ENCODE measurements at regions of chr10 and their contacts with region 1.

Region 1: GRCh38 chr10:8059959-8060703 is 5.6 kb downstream of the GATA3 start:
- DNase-seq: peak; percentile 82
- H3K4me3 ChIP-seq: peak overlapping the region; percentile 86 to 90 (median 87)
- H3K27ac ChIP-seq: peak overlapping the region; percentile 76
- H3K4me1 ChIP-seq: peaks cover 63% of the 10 kb centered on the region
- H3K27me3 ChIP-seq: no peaks in the 10 kb centered on the region
- CTCF ChIP-seq: no peak

Region 2: GRCh38 chr10:8279598-8279997 is 219.5 kb after region 1 on chr10:
- CTCF ChIA-PET with region 1: no interaction called
- dilution Hi-C with region 1: no loop called
- in situ Hi-C with region 1: no loop called
- intact Hi-C with region 1: loop called (anchors 2 kb)
- DNase-seq: peak; percentile 63
- H3K4me3 ChIP-seq: no peak overlapping the region
- H3K27ac ChIP-seq: no peak overlapping the region
- H3K4me1 ChIP-seq: peaks cover 9% of the 10 kb centered on the region
- H3K27me3 ChIP-seq: no peaks in the 10 kb centered on the region
- CTCF ChIP-seq: no peak

Region 3: DNA sequence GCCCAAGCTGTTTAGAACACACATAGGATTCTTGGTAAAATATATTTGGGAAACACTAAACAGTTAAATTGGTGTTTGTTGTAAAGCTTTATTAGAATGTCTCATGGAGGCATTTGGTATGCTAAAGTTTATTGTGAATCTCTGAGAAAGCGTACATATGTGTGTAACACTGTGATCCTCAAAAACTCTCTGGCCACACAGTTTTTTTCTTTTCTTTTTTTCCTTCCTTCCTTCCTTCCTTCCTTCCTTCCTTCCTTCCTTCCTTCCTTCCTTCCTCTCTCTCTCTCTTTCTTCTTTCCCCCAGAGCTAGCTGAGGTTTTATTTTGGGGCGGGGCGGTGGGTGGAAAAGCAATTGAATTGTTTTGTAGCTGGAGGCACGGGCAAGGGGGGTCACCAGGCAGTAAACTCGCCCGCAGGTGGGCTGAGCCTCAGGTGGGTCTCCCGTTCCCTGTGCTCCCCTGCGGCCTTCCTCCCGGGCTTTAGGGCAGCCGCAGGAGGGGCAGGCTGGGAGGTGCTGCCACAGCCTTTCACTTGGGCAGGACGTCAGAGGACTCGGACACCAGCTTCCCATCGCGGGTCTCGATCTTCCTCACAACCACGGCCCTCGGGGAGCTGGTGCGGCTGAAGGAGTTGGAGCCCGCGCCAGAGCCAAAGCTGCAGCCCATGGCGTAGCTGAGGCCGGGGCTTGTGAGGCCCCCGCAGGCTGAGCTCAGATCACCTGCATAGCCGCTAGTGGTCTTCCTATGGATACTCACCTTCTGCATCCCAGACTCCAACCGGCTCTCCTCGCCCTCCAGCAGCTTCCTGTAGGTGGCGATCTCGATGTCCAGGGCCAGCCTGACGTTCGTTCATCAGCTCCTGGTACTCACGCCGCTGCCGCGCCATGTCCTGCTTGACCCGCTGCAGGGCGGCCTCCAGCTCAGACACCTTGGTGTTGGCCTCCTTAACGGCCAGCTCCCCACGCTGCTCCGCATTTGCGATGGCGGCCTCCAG is 453.3 kb after region 1 on chr10:
- CTCF ChIA-PET with region 1: no interaction called
- dilution Hi-C with region 1: no loop called
- in situ Hi-C with region 1: no loop called
- intact Hi-C with region 1: no loop called
- DNase-seq: no peak
- H3K4me3 ChIP-seq: no peak overlapping the region
- H3K27ac ChIP-seq: no peak overlapping the region
- H3K4me1 ChIP-seq: no peaks in the 10 kb centered on the region
- H3K27me3 ChIP-seq: no peaks in the 10 kb centered on the region
- CTCF ChIP-seq: no peak

Region 4: DNA sequence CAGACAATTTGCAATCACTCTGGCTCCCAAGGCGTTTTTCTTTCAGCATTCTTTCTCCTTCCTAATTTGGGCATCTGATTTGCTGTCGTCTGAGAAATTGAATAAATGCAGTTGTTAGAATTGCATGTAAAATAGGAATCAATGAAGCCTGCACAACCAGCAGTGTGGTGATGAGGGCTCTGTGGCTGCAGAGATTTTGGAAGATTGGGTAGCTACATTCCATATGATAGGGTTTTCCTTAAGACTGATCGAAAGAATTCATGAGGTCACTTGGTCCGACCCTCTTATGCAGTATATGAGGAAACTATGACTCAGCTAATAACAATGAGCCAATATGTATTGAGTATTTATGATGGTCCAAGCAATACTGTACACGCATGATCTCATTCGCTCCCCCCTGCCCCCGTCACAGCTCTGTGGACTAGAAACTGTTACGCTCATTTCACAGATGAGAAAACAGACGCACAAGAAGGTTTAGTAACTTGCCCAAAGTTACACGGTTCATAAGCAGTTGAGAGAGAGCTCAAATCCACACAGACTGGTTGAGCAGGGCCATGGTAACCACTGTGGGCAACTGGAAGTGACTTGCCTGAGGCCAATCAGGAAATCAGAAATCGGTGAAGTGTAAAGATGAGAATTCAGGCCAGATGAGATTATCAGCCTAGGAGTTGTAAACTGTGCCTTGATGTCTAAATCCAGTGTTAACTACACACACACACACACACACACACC is 521.6 kb after region 1 on chr10:
- CTCF ChIA-PET with region 1: no interaction called
- dilution Hi-C with region 1: no loop called
- in situ Hi-C with region 1: loop called in 1 of 2 experiments (anchors 10 kb)
- intact Hi-C with region 1: no loop called
- DNase-seq: no peak
- H3K4me3 ChIP-seq: no peak overlapping the region
- H3K27ac ChIP-seq: no peak overlapping the region
- H3K4me1 ChIP-seq: peaks cover 4% of the 10 kb centered on the region
- H3K27me3 ChIP-seq: no peaks in the 10 kb centered on the region
- CTCF ChIP-seq: no peak